Activated CD4-positive, alpha-beta memory T cell treated with anti-CD3 and anti-CD28 coated beads for 36 hours (primary cell): ENCODE measurements at regions of chr20 and their contacts with region 1.

Region 1: DNA sequence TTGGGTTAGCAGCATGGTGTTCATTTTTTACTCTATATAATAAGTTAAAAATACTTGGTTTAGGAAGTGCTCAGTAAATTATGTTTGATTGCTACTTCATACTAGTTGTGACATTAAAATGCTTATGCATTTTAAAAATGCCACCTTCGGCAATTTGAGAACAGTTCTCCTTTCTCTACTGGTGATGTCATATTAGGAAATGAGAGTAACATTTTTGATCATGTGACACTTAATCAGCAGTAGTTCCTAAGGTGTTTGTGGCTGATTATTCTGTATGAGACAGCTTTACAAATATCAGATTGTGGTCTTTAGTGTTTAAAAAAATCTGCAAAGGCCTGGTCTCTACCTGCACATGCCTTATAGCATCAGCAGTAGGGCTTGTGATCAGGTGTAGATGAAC is 4.4 kb downstream of the GZF1 start:
- DNase-seq: no peak
- H3K4me3 Mint-ChIP-seq: no peak overlapping the region
- H3K27ac Mint-ChIP-seq: peak overlapping the region; percentile 81
- H3K4me1 Mint-ChIP-seq: peaks cover 50% of the 10 kb centered on the region
- H3K27me3 Mint-ChIP-seq: peaks cover 2% of the 10 kb centered on the region

Region 2: GRCh38 chr20:23399568-23400241 is 33.3 kb after region 1 on chr20:
- CTCF ChIA-PET with region 1: no interaction called
- POLR2A ChIA-PET with region 1: interaction called, 16 read pairs
- intact Hi-C with region 1: loop called (anchors 1 kb)
- DNase-seq: peak; percentile 27
- H3K4me3 Mint-ChIP-seq: no peak overlapping the region
- H3K27ac Mint-ChIP-seq: no peak overlapping the region
- H3K4me1 Mint-ChIP-seq: peaks cover 31% of the 10 kb centered on the region
- H3K27me3 Mint-ChIP-seq: no peaks in the 10 kb centered on the region

Region 3: DNA sequence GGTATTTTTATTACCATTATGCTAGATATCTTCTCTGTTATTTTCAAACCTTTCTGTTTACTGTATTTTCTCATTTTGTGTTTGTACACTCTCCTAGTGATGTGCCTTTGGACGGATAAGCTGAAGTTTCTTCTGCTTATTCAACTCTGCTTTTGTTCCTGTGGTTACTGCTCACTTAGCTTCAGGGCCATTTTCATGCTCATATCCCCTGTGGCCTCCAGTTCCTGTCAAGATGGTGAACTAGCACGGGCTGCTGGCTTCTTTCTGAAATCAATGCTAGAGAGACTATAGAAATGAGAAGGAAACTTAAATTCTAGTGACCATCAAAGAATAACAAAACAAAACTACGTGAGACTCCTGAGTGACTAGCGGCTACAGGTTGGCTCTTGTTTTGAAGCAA is 117.7 kb after region 1 on chr20:
- CTCF ChIA-PET with region 1: no interaction called
- POLR2A ChIA-PET with region 1: no interaction called
- intact Hi-C with region 1: no loop called
- DNase-seq: no peak
- H3K4me3 Mint-ChIP-seq: no peak overlapping the region
- H3K27ac Mint-ChIP-seq: no peak overlapping the region
- H3K4me1 Mint-ChIP-seq: no peaks in the 10 kb centered on the region
- H3K27me3 Mint-ChIP-seq: peaks cover 4% of the 10 kb centered on the region

Region 4: GRCh38 chr20:23497536-23497935 is 131.2 kb after region 1 on chr20:
- CTCF ChIA-PET with region 1: no interaction called
- POLR2A ChIA-PET with region 1: no interaction called
- intact Hi-C with region 1: loop called (anchors 2 kb)
- DNase-seq: peak; percentile 35
- H3K4me3 Mint-ChIP-seq: no peak overlapping the region
- H3K27ac Mint-ChIP-seq: no peak overlapping the region
- H3K4me1 Mint-ChIP-seq: peaks cover 6% of the 10 kb centered on the region
- H3K27me3 Mint-ChIP-seq: peaks cover 23% of the 10 kb centered on the region